ENCODE measurements at regions of chr20 and their contacts with region 1.

Region 1: GRCh38 chr20:12925214-12925755 is 83.5 kb upstream of the SPTLC3 start:
- DNase-seq: peak; percentile 68
- ATAC-seq: peak; percentile 72
- H3K4me3 Mint-ChIP-seq: no peak overlapping the region
- H3K27ac Mint-ChIP-seq: no peak overlapping the region; the same call in 1 of the 2 replicates
- H3K4me1 Mint-ChIP-seq: peaks cover 30% of the 10 kb centered on the region
- H3K27me3 Mint-ChIP-seq: peaks cover 6% of the 10 kb centered on the region
- CTCF ChIP-seq: peak; percentile 33; the same call in 1 of the 2 replicates

Region 2: DNA sequence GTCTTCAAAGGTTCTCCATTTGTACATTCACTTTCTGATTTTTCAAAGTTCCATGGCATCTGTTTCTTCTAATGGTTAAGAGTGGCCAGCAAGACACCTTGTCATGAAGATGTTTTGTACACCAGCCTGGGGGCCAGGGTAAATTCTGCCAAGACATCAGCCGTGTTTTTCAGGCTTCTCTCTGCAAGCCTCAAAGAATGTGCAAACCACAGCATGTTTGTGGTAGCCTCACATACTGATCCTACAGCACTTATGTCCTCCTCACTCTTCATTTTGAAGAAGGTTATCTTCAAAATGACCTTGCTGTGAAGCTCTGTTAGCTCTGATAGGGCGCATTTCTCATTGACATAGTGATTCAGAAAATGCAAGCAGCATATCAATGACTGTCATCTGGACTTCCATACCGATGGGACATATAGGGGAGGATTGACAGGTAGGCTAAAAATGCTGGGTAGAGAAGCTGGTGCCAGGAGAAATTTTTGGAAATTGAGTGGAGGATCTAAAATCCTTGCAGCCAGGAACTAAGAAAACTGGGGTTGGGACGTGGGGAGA is 24.2 kb after region 1 on chr20:
- CTCF ChIA-PET with region 1: no interaction called
- POLR2A ChIA-PET with region 1: no interaction called
- DNase-seq: no peak
- ATAC-seq: no peak
- H3K4me3 Mint-ChIP-seq: no peak overlapping the region
- H3K27ac Mint-ChIP-seq: no peak overlapping the region
- H3K4me1 Mint-ChIP-seq: no peaks in the 10 kb centered on the region
- H3K27me3 Mint-ChIP-seq: no peaks in the 10 kb centered on the region
- CTCF ChIP-seq: no peak

Region 3: GRCh38 chr20:12966468-12967341 is 41.4 kb after region 1 on chr20:
- CTCF ChIA-PET with region 1: interaction called, 22 read pairs
- POLR2A ChIA-PET with region 1: no interaction called
- DNase-seq: no peak
- ATAC-seq: no peak
- H3K4me3 Mint-ChIP-seq: no peak overlapping the region
- H3K27ac Mint-ChIP-seq: no peak overlapping the region
- H3K4me1 Mint-ChIP-seq: peaks cover 15% of the 10 kb centered on the region
- H3K27me3 Mint-ChIP-seq: peaks cover 4% of the 10 kb centered on the region; the same call in 1 of the 2 replicates
- CTCF ChIP-seq: no peak

Region 4: DNA sequence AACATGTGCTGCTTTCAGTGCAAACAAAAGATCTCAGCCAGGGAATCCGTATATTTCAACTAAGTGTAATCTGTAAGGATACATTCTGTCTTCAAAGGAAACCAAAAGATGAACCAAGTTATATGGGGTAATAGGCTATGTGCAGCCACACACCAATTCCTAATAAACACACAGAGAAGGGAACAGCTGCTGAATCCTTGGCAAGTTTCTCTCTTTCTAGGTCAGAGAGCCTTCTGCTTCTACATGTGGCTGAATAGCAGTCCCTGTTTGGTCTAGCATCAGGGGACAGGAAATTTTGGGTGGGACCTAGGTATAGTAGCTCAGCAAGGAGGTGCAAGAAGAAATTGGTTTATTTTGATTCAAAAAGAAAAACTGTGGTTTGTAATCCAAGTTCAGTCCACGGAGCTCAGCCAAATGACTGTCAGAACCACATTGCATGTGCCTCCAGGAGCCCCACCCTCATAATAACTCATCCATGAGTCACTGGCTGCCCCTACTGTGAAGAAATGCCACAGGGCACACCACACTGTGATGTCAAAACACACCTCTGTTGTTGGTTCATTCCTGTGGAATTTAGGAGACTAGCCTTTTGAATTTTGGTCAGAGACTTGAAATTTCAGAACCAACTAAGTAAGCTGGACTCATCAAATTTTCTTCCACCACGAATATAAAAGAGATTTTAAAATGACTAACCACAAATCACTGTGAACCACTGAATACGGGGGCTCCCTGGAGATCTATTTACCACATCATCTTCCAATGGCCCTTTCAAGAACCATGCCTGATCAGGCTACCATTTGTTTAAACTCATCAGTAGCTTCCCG is 104.6 kb after region 1 on chr20:
- CTCF ChIA-PET with region 1: no interaction called
- POLR2A ChIA-PET with region 1: no interaction called
- DNase-seq: no peak
- ATAC-seq: peak; percentile 61
- H3K4me3 Mint-ChIP-seq: no peak overlapping the region
- H3K27ac Mint-ChIP-seq: no peak overlapping the region
- H3K4me1 Mint-ChIP-seq: peaks cover 6% of the 10 kb centered on the region
- H3K27me3 Mint-ChIP-seq: no peaks in the 10 kb centered on the region; the same call in 1 of the 2 replicates
- CTCF ChIP-seq: no peak

Region 5: GRCh38 chr20:13105039-13105438 is 179.8 kb after region 1 on chr20:
- CTCF ChIA-PET with region 1: interaction called, 11 read pairs
- POLR2A ChIA-PET with region 1: no interaction called
- DNase-seq: no peak
- ATAC-seq: peak; percentile 82
- H3K4me3 Mint-ChIP-seq: no peak overlapping the region
- H3K27ac Mint-ChIP-seq: no peak overlapping the region
- H3K4me1 Mint-ChIP-seq: peaks cover 24% of the 10 kb centered on the region
- H3K27me3 Mint-ChIP-seq: no peaks in the 10 kb centered on the region; the same call in 1 of the 2 replicates
- CTCF ChIP-seq: no peak

Region 6: DNA sequence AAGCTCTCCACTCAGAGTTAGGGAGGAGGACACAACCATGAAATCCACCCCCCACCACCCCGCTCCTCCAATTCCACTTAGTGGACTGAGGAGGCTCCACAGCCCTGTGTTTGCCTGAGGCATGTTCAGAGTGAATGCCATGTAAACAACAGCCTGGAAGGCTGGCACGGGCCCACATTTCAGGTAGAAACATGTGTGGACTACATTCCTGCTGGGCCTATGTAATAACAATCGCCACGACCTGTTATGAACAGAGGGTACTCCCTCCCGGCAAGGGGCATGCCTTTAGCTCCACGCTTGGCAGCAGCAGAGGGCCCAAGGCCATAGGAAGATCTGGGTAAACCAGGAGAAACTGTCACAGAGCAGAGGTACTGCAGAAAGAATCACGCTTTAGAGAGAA is 361.3 kb after region 1 on chr20:
- CTCF ChIA-PET with region 1: no interaction called
- POLR2A ChIA-PET with region 1: no interaction called
- DNase-seq: no peak
- ATAC-seq: no peak
- H3K4me3 Mint-ChIP-seq: no peak overlapping the region
- H3K27ac Mint-ChIP-seq: no peak overlapping the region
- H3K4me1 Mint-ChIP-seq: peaks cover 6% of the 10 kb centered on the region; the same call in 1 of the 2 replicates
- H3K27me3 Mint-ChIP-seq: no peaks in the 10 kb centered on the region
- CTCF ChIP-seq: no peak

Measured in WTC11 (cell line).